ENCODE measurements at regions of chr7 and their contacts with region 1.

Region 1: GRCh38 chr7:81256991-81257390 is 338.1 kb upstream of the SEMA3C start:
- DNase-seq: no peak
- ATAC-seq: no peak
- H3K4me3 ChIP-seq: no peak overlapping the region
- H3K27ac ChIP-seq: peak overlapping the region; percentile 29; the same call in 1 of the 2 replicates
- H3K4me1 ChIP-seq: no peaks in the 10 kb centered on the region
- H3K27me3 ChIP-seq: no peaks in the 10 kb centered on the region
- CTCF ChIP-seq: peak; percentile 29

Region 2: DNA sequence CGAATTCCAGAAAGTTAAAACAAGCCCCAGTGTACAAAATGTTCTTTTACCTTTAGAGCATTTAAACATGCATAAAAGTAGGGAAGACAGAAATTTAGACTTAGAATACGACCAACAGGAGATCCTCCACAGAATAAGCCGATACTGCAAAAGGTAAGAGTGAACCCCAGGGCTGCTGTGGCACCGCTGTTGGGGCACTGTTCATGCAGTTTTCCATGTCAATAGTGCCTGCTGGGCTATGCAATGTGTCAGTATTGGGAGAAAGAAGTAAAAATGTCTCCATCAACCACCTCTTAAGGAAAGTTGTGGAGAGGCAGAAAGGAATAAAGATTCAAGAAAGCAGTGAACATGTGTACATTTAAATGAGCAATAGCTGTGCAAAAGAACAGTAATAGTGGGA is 11.6 kb before region 1 on chr7:
- CTCF ChIA-PET with region 1: no interaction called
- POLR2A ChIA-PET with region 1: no interaction called
- in situ Hi-C with region 1: no loop called
- intact Hi-C with region 1: loop called (anchors 1 kb)
- DNase-seq: no peak
- ATAC-seq: no peak
- H3K4me3 ChIP-seq: no peak overlapping the region
- H3K27ac ChIP-seq: no peak overlapping the region
- H3K4me1 ChIP-seq: no peaks in the 10 kb centered on the region
- H3K27me3 ChIP-seq: no peaks in the 10 kb centered on the region
- CTCF ChIP-seq: no peak

Measured in Panc1 (cell line).